Sigmoid colon (tissue), 7 donors: ENCODE measurements at regions of chr22 and their contacts with region 1.

Region 1: DNA sequence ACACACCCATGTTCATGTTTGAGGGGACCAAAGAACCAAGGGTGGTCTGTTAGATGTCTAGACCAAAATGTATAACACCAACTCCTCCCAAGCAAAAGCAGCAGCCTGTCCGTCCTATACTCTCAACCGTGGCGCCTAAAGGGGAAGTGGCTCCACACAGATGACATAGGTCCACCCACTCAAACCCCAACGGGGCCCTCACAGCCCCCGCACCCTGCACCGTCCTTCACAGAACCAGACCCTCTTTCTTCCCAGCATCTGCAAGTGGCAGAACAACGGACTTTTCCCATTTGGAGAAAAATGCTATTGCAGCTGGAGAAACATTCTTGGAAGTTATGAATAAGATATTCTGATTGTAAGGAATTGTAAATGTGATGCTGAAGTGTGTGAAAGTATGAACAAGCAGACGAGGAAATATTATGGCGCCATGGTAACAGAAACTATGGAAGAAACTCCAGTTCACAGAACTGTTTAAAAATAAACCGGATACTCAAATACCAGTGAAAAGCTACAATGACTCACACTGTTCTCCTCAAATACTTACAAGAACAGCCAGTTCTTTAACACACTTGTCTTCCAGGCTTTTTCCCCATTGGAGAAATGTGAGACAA is 76.5 kb upstream of the ARFGAP3 start:
- DNase-seq: no peak
- H3K4me3 ChIP-seq: peak overlapping the region in 2 of 4 donors; percentile 10 to 16
- H3K27ac ChIP-seq: peak overlapping the region; percentile 82 to 94 (median 90)
- H3K4me1 ChIP-seq: peaks cover 0 to 100% (median 99%) of the 10 kb centered on the region in 4 donors
- H3K27me3 ChIP-seq: no peaks in the 10 kb centered on the region
- CTCF ChIP-seq: no peak
- EP300 ChIP-seq: peak in 3 of 4 donors; percentile 4 to 73 (median 20)
- POLR2A ChIP-seq: no peak

Region 2: DNA sequence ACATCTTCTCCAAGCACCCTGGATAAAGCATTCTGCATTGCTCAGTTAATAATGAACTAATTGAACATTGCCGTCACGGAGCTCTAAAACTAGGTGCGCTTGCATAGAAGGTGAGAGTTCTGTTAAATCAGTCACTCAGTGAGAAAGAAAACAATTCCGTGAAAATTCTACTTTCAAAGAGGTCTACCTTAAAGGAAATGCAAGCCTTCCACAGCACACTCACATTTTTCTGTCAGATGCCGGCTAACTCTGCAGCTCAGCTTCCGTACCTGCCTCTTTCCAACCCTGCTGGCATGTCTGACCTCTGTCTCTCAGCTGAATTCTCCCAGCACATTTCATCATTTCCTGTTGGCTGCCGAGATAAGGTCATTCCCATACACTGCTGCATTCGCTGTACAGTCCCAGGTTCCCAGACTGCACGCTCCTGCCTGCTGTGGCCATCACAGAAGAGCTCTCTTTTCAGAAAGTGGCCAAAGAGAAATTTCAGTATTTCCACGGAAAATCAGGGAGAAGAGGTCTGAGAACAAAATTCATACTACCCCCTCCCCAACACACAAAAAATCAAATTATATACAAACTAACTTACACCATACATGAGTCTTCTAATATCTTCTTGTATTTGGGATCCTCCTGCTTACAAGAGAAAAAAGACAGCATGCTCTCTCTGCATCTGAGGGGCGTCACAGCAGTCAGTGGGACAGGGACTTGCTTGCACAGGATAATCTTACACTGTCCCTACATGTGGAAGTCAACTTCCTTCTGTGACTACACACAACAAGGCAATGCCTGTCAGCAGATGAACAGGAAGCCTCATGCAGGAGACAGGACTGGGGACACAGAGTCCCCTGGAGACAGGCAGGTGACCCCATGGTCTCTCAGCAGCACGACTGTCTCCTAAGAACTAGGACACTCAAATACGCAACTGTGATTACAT is 26.3 kb after region 1 on chr22:
- intact Hi-C with region 1: loop called (anchors 5 kb)
- DNase-seq: peak; percentile 77
- H3K4me3 ChIP-seq: peak overlapping the region in 3 of 4 donors; percentile 3 to 28 (median 21)
- H3K27ac ChIP-seq: peak overlapping the region; percentile 53 to 75 (median 70)
- H3K4me1 ChIP-seq: peaks cover 0 to 77% (median 65%) of the 10 kb centered on the region in 4 donors
- H3K27me3 ChIP-seq: no peaks in the 10 kb centered on the region
- CTCF ChIP-seq: no peak
- EP300 ChIP-seq: no peak
- POLR2A ChIP-seq: no peak

Region 3: DNA sequence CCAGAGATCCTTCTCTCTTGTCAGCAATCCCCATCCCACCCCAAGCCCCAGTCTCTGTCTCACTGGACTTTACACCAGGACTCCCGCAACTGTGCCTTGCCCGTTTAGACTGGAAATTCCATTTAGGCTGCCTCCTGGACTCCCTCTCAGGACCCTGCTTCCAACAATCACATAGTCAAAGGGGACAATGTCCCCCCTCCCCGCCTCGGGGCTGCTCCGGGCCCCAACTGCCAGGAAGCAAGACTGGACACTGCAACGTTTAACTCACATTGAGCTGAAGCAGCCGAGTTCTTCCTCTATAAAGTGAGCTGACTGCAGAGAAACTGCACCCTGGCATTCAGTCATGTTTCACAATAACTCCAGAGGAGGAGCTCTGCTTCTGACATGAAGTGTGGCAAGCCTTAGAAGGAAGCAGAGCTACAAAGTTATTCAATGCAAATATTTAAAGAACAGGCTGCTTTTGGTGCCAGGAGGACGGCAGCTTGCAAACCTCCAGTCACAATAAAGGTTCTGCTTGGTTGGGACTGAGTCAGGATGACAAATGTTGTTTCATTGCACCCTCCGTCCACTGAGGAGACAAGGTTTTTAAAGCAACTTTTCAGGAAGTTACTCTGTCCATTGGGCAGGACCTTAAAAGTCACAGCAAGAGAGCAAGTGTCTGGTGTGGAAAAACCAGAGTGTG is 61.4 kb after region 1 on chr22:
- intact Hi-C with region 1: loop called (anchors 5 kb)
- DNase-seq: peak; percentile 88
- H3K4me3 ChIP-seq: peak overlapping the region; percentile 15 to 47 (median 42)
- H3K27ac ChIP-seq: peak overlapping the region; percentile 89 to 93 (median 90)
- H3K4me1 ChIP-seq: peaks cover 0 to 91% (median 78%) of the 10 kb centered on the region in 4 donors
- H3K27me3 ChIP-seq: no peaks in the 10 kb centered on the region
- CTCF ChIP-seq: no peak
- EP300 ChIP-seq: peak in 2 of 4 donors; percentile 13 to 25
- POLR2A ChIP-seq: peak; percentile 64 to 69